ENCODE measurements at regions of chr13 and their contacts with region 1.

Region 1: DNA sequence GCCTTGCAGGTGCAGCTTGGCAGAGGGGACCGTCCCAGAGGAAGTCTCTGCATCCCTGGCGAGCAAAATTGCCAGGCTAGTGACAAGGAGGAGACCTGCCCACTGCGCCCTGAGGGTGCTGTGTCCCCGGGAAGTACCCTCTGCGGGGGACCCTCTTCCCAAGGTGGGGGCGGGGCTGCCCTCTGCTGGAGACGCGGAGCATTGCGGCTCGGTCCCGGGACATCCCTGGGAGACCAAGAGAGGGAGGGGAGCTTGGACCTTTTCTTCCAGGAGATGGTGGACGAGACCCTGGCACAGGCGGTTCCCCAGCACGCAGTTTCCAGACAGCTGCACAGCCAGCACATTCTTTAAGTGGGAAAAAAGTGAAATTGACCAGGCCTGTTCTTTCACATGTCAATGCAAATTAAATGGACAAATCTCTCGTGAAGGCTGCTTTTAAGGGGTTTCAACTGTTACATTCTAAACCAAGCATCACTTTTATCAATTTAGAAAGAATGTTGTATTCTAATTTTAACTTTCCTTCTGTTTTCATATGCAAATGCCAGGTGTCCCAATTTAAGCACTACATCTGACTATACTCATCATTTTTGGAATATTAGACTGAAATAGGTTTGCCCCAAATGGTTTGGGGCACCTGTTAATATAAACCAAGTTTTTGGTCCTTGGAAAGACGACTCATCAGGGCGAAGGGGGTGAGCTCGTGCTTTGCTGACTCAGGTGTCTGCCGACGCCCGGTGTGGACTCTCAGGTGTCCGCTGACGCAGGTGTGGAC is 60.7 kb downstream of the MCF2L start:
- DNase-seq: no peak
- ATAC-seq: peak; percentile 72
- H3K4me3 ChIP-seq: no peak overlapping the region
- H3K27ac ChIP-seq: no peak overlapping the region
- H3K4me1 ChIP-seq: no peaks in the 10 kb centered on the region
- H3K27me3 ChIP-seq: no peaks in the 10 kb centered on the region
- CTCF ChIP-seq: peak; percentile 79

Region 2: DNA sequence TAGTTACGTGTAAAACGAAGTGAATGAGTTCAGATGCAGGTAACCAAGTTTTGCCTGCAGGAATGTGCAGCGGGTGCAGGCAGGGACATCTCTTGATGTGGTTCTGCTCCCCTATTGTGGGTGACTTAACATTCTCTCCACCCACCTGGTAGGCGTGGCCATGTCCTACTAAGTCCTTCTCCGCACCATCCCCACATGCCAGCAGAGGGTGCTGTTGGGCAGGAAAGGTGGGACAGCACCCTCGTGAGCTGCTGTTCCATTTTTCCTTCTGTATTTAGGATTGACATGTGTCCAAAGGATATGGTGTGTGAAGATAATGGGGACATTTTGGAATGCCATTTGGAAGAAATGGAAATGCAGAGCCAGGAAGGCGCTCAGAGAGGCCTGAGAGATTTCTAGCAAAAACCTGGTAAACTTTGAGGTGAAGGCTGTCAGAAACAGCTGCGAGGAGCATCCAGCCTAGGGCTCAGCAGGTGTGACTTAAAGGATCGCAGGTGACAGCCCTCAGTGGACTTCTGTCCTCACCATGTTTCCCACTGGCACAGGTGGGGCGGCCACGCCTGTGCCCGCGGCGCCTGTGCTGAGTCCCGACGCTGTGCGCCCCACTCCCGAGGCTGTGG is 86.9 kb before region 1 on chr13:
- intact Hi-C with region 1: loop called (anchors 10 kb)
- DNase-seq: peak; percentile 98
- ATAC-seq: peak; percentile 98
- H3K4me3 ChIP-seq: peak overlapping the region; percentile 61
- H3K27ac ChIP-seq: peak overlapping the region; percentile 63
- H3K4me1 ChIP-seq: peaks cover 12% of the 10 kb centered on the region
- H3K27me3 ChIP-seq: no peaks in the 10 kb centered on the region
- CTCF ChIP-seq: peak; percentile 98

Region 3: DNA sequence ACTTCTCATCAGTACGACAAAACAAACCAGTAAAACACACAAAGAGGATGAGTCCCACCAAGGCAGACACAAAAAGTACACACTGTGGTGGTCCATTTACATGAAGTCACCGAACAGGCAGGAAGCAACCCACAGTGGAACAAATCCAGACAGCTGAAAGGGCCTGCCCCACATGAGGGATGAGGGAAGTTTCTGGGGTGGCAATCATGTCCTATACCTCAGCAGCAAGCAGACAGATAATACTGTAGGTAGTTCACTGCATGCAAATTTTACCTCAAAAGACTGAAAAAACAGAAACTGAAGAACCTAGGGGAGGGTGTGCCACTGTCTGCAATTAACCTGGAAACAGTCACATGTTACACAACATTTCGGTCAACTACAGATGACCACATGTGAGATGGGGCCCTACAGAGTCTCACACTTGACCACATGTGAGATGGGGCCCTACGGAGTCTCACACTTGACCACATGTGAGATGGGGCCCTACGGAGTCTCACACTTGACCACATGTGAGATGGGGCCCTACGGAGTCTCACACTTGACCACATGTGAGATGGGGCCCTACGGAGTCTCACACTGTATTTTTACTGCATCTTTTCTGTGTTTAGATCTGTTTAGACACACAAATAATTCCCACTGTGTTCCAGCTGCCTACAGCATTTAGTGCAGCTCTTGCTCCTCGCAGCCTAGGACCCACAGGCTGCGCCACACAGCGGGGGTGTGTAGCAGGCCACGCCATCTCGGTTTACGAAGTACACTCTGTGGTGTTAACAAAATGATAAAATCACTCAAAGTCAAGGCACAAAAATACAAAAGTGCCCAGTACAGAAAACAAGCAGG is 156.6 kb after region 1 on chr13:
- intact Hi-C with region 1: no loop called
- DNase-seq: no peak
- ATAC-seq: peak; percentile 31
- H3K4me3 ChIP-seq: no peak overlapping the region
- H3K27ac ChIP-seq: peak overlapping the region; percentile 4
- H3K4me1 ChIP-seq: no peaks in the 10 kb centered on the region
- H3K27me3 ChIP-seq: no peaks in the 10 kb centered on the region
- CTCF ChIP-seq: no peak